IMR-90 (cell line): ENCODE measurements at regions of chr14 and their contacts with region 1.

Region 1: DNA sequence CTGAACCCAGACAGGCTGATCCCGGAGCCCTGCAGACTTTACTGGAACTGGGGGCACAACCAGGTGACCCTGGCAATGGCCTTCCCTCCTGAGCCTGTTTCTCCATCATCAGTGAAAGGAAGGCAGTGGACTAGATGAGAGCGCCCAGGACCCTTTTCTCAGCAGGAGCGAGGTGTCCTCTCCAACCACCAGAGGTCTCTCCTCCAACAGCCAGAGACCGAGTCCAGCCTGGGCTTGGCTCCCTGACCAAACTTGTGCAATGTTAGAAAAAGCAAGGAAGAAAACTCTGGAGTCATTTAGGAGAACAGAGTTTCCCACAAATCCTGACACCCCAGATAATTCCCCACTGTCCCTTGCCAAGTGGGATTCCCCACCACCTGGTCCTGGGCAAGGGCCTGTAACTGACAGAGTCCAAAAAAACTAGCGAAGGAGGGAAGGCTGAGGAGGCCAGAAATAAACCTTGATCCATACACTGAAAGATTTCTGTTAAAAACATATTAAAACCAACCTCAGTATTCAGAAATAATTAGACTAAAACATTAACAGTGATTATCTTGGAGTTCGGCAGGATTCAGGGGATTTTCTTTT is 9.0 kb downstream of the RPS6KL1 start:
- DNase-seq: peak; percentile 77
- ATAC-seq: peak; percentile 93
- H3K4me3 ChIP-seq: no peak overlapping the region
- H3K27ac ChIP-seq: no peak overlapping the region
- H3K4me1 ChIP-seq: peaks cover 1% of the 10 kb centered on the region; the same call in 1 of the 2 replicates
- H3K27me3 ChIP-seq: no peaks in the 10 kb centered on the region
- CTCF ChIP-seq: peak; percentile 90
- POLR2A ChIP-seq: no peak
- RAD21 ChIP-seq: peak; percentile 89

Region 2: GRCh38 chr14:75077794-75078193 is 163.7 kb after region 1 on chr14:
- CTCF ChIA-PET with region 1: no interaction called
- POLR2A ChIA-PET with region 1: no interaction called
- dilution Hi-C with region 1: no loop called
- in situ Hi-C with region 1: loop called (anchors 5 kb)
- intact Hi-C with region 1: no loop called
- DNase-seq: no peak
- ATAC-seq: no peak
- H3K4me3 ChIP-seq: no peak overlapping the region
- H3K27ac ChIP-seq: no peak overlapping the region
- H3K4me1 ChIP-seq: peaks cover 6% of the 10 kb centered on the region
- H3K27me3 ChIP-seq: no peaks in the 10 kb centered on the region
- CTCF ChIP-seq: no peak
- POLR2A ChIP-seq: no peak
- RAD21 ChIP-seq: no peak

Region 3: DNA sequence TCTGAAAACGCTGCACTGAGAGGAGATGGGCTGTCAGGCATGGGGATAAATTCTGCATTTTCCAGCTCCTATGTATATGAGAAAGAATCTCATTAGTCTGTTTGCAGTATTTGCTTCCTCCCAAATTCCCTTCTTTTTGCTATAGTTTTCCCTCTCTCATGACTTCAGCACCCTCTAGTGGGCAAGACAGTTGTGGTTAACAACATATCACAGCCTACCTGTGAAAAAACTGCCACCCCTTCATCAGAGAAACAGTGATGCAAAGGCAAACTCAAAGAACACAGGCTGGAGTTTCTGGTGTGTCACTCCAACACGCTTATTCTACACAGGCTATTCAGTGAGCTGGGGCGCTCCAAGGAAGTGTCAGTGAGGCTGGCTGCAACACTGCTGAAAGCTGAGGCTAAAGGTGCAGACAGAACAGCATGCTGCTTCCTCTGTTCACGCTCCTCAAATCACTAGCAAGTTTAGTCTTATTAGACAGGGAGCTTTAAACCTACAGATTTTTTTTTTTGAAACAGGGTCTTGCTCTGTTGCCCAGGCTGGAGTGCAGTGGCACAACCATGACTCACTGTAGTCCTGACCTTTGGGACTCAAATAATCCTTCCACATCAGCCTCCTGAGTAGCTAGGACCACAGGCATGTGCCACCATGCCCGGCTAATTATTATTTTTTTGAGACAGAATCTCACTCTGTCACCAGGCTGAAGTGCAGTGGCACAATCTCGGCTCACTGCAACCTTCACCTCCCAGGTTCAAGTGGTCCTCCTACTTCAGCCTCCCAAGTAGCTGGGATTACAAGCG is 174.7 kb after region 1 on chr14:
- CTCF ChIA-PET with region 1: no interaction called
- POLR2A ChIA-PET with region 1: no interaction called
- dilution Hi-C with region 1: no loop called
- in situ Hi-C with region 1: no loop called
- intact Hi-C with region 1: loop called (anchors 1 kb)
- DNase-seq: peak; percentile 65
- ATAC-seq: peak; percentile 79
- H3K4me3 ChIP-seq: no peak overlapping the region
- H3K27ac ChIP-seq: no peak overlapping the region
- H3K4me1 ChIP-seq: 0 out of 2 replicates have a peak, but pooled peaks cover 3% of the 10 kb centered on the region
- H3K27me3 ChIP-seq: no peaks in the 10 kb centered on the region
- CTCF ChIP-seq: peak; percentile 94
- POLR2A ChIP-seq: peak; percentile 56; the same call in 1 of the 2 replicates
- RAD21 ChIP-seq: peak; percentile 95